ENCODE measurements at regions of chr5 and their contacts with region 1.

Region 1: DNA sequence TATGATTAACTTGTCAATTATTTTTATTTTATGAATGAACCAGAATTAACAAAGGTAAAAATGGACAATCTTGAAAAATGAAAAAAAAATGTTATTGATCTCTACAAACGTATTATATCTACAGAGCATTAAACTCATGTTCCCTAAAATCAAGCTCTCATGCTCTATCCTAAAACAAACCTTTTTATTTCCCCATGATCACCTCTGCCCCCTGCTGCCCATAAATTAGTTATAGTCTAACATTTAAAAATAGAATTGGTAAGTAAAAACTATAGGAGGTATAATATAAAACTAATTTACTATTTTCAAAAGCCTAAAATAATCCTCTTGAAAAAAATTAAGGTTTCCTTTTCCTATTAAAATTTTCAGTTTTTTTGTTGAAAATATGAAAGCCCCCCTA is 168.0 kb upstream of the POU5F2 start:
- DNase-seq: no peak
- ATAC-seq: no peak
- H3K4me3 ChIP-seq: no peak overlapping the region
- H3K27ac ChIP-seq: no peak overlapping the region
- H3K4me1 ChIP-seq: peaks cover 13% of the 10 kb centered on the region
- H3K27me3 ChIP-seq: no peaks in the 10 kb centered on the region
- CTCF ChIP-seq: no peak
- EP300 ChIP-seq: no peak
- POLR2A ChIP-seq: no peak
- RAD21 ChIP-seq: no peak

Region 2: DNA sequence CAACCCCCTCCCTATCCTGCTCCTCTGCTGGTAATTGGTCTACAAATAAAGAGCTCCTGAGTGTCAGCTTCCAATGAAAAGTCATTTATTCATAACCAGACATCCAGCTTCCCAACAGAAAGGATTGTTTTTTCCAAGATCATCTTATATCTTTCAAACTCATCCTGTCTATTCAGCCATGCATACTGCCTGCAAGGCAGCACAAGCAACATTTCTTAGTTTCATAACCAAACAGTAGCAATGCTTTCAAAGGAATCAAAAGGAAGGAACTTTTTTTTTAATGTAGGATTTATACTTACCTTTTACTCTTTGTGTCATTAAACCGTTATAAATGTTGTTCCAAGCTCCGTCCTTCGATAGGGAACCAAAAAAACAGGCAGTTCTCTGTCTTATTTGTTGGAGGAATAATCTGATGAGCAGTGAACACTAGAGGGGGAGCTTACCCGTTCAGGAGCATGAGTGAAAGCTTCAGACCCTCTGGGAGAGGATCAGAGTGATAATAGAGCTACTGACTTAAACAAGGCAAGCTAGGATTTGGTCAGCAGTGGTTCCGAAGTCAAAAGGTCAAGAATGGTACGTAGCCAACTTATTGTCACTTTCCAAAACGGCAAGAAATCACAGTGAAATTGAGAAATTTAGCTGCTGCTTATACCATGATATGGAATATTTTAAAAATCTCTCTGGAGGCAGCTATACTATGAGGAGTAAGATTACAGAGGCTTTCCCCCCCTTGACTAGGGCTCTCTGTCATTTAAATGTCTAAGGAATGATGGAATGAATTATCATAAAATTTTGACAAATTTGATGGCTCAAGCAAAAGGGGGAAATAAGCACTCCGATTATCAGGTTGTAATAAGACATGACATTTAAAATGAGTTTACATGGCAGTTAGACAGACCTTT is 1221.3 kb before region 1 on chr5:
- CTCF ChIA-PET with region 1: no interaction called
- POLR2A ChIA-PET with region 1: no interaction called
- in situ Hi-C with region 1: no loop called
- intact Hi-C with region 1: loop called (anchors 5 kb)
- DNase-seq: peak; percentile 43
- ATAC-seq: peak; percentile 90
- H3K4me3 ChIP-seq: no peak overlapping the region
- H3K27ac ChIP-seq: no peak overlapping the region
- H3K4me1 ChIP-seq: no peaks in the 10 kb centered on the region
- H3K27me3 ChIP-seq: no peaks in the 10 kb centered on the region
- CTCF ChIP-seq: peak; percentile 65
- EP300 ChIP-seq: no peak
- POLR2A ChIP-seq: no peak
- RAD21 ChIP-seq: no peak

Region 3: DNA sequence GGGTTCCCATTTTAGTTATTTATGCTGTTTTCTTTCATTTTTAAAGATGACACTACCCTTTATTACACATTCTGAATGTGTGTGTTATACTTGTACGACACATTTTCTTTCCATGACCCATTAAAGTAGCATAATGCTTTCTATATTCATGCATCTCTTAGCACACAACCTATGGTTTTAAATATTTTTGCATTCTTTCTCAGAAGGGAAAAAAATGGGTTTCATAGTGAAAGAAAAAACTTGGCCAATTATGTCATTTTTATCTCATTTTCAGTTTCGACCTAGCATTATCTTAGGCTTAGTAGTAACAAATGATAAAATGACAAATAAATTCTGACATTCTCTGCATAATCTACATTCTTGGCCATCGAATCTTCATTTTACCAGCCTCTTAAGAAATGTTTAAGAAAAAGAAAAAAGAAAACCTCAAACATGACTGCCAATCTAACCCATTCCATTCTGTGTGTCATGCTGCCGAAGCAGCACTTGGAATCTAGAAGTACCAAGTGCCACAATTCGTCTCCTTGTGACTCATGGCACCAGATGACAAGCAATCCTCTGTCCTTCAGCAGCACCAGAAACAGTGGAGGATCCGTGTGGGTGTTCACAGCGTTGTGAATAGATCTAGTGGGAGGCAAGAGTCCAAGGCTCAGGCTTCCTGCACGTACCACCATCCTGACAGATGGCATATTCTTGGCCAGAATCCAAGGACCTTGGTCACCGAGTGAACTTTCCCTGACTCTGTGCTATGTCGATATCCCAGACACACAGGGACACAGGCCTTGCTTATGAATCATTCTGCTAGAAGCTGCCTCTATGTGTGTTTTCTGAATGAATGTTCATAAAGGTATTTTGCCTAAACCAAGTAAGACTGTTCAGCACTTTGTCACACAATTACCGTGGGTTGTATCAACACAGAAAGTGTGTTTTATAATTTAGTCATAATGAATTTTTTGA is 831.0 kb before region 1 on chr5:
- CTCF ChIA-PET with region 1: no interaction called
- POLR2A ChIA-PET with region 1: no interaction called
- in situ Hi-C with region 1: no loop called
- intact Hi-C with region 1: loop called (anchors 10 kb)
- DNase-seq: peak; percentile 98
- ATAC-seq: peak; percentile 99
- H3K4me3 ChIP-seq: peak overlapping the region in 1 of 3 experiments; percentile 13; a peak in 1 of 6 replicates
- H3K27ac ChIP-seq: peak overlapping the region; percentile 76
- H3K4me1 ChIP-seq: peaks cover 37% of the 10 kb centered on the region
- H3K27me3 ChIP-seq: no peaks in the 10 kb centered on the region
- CTCF ChIP-seq: peak; percentile 28; the same call in 1 of the 2 replicates
- EP300 ChIP-seq: peak; percentile 68 to 85; a peak in 2 of 4 replicates
- POLR2A ChIP-seq: peak in 1 of 2 experiments; percentile 60; a peak in 2 of 4 replicates
- RAD21 ChIP-seq: no peak; the same call in 1 of the 2 replicates

Region 4: GRCh38 chr5:93850311-93850710 is 59.0 kb before region 1 on chr5:
- CTCF ChIA-PET with region 1: no interaction called
- POLR2A ChIA-PET with region 1: no interaction called
- in situ Hi-C with region 1: no loop called
- intact Hi-C with region 1: loop called (anchors 2 kb)
- DNase-seq: no peak
- ATAC-seq: peak; percentile 79
- H3K4me3 ChIP-seq: no peak overlapping the region
- H3K27ac ChIP-seq: no peak overlapping the region
- H3K4me1 ChIP-seq: no peaks in the 10 kb centered on the region
- H3K27me3 ChIP-seq: no peaks in the 10 kb centered on the region
- CTCF ChIP-seq: 0 out of 2 replicates have a peak, but pooled peaks have one; percentile 11
- EP300 ChIP-seq: no peak
- POLR2A ChIP-seq: no peak
- RAD21 ChIP-seq: no peak

Region 5: DNA sequence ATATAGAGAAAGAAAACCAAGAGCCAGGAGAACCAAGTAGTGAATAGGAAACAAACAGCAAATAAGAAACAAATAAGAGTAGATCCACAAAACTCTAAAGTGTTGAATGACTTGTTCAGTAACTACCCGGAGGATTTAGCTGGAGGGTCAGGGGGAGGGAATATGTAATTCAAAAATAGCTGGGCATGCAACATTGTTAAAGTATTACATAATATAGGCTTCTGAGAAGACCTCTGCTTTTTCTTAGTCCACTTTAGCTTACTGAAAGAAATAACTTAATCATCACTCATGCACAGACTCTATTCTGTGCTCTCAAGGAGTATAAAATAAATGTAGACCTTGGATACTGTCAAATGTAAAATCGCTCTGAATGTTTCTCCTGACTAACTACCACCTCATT is 15.3 kb after region 1 on chr5:
- CTCF ChIA-PET with region 1: no interaction called
- POLR2A ChIA-PET with region 1: no interaction called
- in situ Hi-C with region 1: no loop called
- intact Hi-C with region 1: loop called (anchors 1 kb)
- DNase-seq: no peak
- ATAC-seq: no peak
- H3K4me3 ChIP-seq: no peak overlapping the region
- H3K27ac ChIP-seq: no peak overlapping the region
- H3K4me1 ChIP-seq: no peaks in the 10 kb centered on the region
- H3K27me3 ChIP-seq: no peaks in the 10 kb centered on the region
- CTCF ChIP-seq: no peak
- EP300 ChIP-seq: no peak
- POLR2A ChIP-seq: no peak
- RAD21 ChIP-seq: no peak

Region 6: GRCh38 chr5:94433454-94434149 is 524.2 kb after region 1 on chr5:
- CTCF ChIA-PET with region 1: no interaction called
- POLR2A ChIA-PET with region 1: no interaction called
- in situ Hi-C with region 1: no loop called
- intact Hi-C with region 1: no loop called
- DNase-seq: peak; percentile 4
- ATAC-seq: no peak
- H3K4me3 ChIP-seq: no peak overlapping the region
- H3K27ac ChIP-seq: no peak overlapping the region
- H3K4me1 ChIP-seq: no peaks in the 10 kb centered on the region
- H3K27me3 ChIP-seq: no peaks in the 10 kb centered on the region
- CTCF ChIP-seq: no peak
- EP300 ChIP-seq: no peak
- POLR2A ChIP-seq: no peak
- RAD21 ChIP-seq: no peak